Gastrocnemius medialis (tissue), 4 donors: ENCODE measurements at regions of chr10 and their contacts with region 1.

Region 1: DNA sequence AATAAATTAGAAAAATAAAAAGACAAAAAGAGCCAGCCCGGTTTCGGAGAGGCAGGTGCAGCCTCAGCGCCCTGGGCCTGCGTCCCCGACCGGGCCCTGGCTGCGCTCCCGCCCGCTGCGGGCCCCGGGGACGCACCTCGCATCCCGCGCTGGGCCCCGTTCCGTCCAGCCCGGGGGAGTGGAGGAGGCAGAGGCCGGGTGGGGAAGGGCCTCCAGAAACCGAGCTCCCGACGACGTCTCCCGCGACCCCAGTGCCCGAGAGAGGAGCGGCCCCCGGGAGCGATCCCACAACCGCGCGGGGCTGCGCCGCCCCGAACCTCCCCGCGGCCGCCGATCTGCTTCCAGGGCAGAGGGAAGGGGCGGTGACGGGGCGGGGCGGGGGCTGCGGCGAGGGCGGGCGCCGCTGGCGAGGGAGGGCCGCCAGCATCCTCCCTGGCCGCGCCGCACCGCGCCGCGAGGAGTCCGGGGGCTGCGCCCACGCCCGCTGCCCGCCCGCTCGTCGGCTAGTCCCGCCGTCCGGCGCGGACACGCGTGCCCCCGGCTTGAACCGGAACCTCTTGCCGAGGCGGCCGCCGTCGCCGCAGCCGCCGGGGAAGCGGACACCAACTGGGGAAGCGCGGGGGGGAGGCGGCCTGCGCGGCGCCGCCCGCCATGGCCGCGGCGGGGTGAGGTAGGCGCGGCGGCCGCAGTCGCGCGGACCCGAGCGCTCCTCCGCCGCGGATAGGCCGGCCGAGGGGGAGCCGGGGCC is at the start of gene CCNY:
- DNase-seq: peak; percentile 48 to 65
- ATAC-seq: peak; percentile 64 to 71
- H3K4me3 ChIP-seq: peak within 1 kb of the TSS; percentile 89 to 98 (median 94)
- H3K27ac ChIP-seq: peak within 1 kb of the TSS; percentile 87 to 98 (median 96)
- H3K4me1 ChIP-seq: peaks cover 71 to 82% of the 10 kb centered on the region in 2 donors
- H3K27me3 ChIP-seq: no peaks in the 10 kb centered on the region
- CTCF ChIP-seq: no peak
- POLR2A ChIP-seq: peak; percentile 88
- total RNA-seq, gene CCNY: 23.9 to 68.1 (median 39.5) TPM

Region 2: GRCh38 chr10:34801097-34801733 is 535.0 kb before region 1 on chr10:
- in situ Hi-C with region 1: no loop called
- intact Hi-C with region 1: no loop called
- DNase-seq: peak; percentile 38 to 53
- ATAC-seq: peak; percentile 81 to 95
- H3K4me3 ChIP-seq: peak overlapping the region in 1 of 4 donors; percentile 0
- H3K27ac ChIP-seq: peak overlapping the region in 2 of 4 donors; percentile 41 to 66
- H3K4me1 ChIP-seq: peaks cover 22 to 29% of the 10 kb centered on the region in 2 donors
- H3K27me3 ChIP-seq: no peaks in the 10 kb centered on the region
- CTCF ChIP-seq: no peak
- POLR2A ChIP-seq: no peak

Region 3: GRCh38 chr10:35103882-35104281 is 232.4 kb before region 1 on chr10:
- in situ Hi-C with region 1: loop called in 1 of 4 experiments (anchors 25 kb)
- intact Hi-C with region 1: no loop called
- DNase-seq: no peak
- ATAC-seq: no peak
- H3K4me3 ChIP-seq: no peak overlapping the region
- H3K27ac ChIP-seq: no peak overlapping the region
- H3K4me1 ChIP-seq: no peaks in the 10 kb centered on the region
- H3K27me3 ChIP-seq: no peaks in the 10 kb centered on the region
- CTCF ChIP-seq: no peak
- POLR2A ChIP-seq: no peak

Region 4: DNA sequence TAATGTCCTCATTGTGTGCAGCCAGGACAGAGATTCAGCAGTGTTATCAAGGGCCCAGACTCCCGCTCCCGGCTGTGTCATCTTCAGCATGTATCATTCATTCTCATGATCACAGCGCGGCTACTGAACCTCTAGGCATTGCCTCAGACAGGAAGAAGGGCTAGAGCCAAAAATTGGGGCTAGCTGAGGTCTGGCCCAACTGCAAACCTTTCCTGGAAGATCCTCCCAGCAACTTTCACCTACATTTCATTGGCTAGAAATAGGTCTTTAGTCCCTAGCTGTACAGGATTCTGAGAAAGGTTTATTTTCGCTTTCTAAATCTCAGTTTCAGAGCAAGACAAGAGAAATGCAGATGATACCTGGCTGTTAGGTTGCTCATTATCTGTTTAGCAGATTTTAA is 127.7 kb before region 1 on chr10:
- in situ Hi-C with region 1: no loop called
- intact Hi-C with region 1: loop called (anchors 5 kb)
- DNase-seq: peak; percentile 29 to 64
- ATAC-seq: peak; percentile 85 to 91
- H3K4me3 ChIP-seq: peak overlapping the region; percentile 22 to 43 (median 38)
- H3K27ac ChIP-seq: peak overlapping the region; percentile 78 to 88 (median 82)
- H3K4me1 ChIP-seq: peaks cover 18 to 19% of the 10 kb centered on the region in 2 donors
- H3K27me3 ChIP-seq: no peaks in the 10 kb centered on the region
- CTCF ChIP-seq: no peak
- POLR2A ChIP-seq: no peak

Region 5: DNA sequence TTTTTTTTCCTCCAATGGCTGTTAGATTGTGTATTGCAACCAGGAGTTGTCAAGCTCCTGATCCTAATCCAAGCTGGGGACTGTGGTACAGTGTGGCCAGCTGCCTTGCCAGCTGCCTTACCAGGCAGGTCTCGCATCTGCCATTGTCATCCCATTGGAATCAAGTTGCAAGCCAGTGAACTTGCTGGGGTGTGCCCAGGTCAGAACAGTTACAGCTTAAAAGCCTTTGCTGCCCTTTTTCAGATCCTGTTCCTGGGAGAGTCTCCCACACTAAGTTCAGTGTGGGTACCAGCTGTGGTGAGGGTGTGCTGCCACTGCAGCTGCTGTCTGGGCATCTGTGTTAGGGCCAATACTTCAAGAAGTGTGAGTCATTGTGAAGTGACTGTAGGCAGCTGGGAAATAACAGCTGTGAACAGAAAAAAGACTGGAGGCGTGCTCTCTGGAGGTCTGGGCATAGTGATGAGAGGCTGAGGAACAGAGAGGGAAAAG is 72.9 kb after region 1 on chr10:
- in situ Hi-C with region 1: no loop called
- intact Hi-C with region 1: loop called (anchors 5 kb)
- DNase-seq: peak; percentile 80 to 90
- ATAC-seq: peak; percentile 99
- H3K4me3 ChIP-seq: no peak overlapping the region
- H3K27ac ChIP-seq: peak overlapping the region; percentile 59 to 69 (median 67)
- H3K4me1 ChIP-seq: peaks cover 60 to 62% of the 10 kb centered on the region in 2 donors
- H3K27me3 ChIP-seq: no peaks in the 10 kb centered on the region
- CTCF ChIP-seq: no peak
- POLR2A ChIP-seq: peak in 1 of 2 donors; percentile 15

Region 6: GRCh38 chr10:35421553-35422178 is 85.4 kb after region 1 on chr10:
- in situ Hi-C with region 1: no loop called
- intact Hi-C with region 1: loop called (anchors 5 kb)
- DNase-seq: peak; percentile 50 to 53
- ATAC-seq: peak; percentile 89 to 91
- H3K4me3 ChIP-seq: peak overlapping the region; percentile 0 to 26 (median 16)
- H3K27ac ChIP-seq: peak overlapping the region; percentile 69 to 82 (median 79)
- H3K4me1 ChIP-seq: peaks cover 64 to 84% of the 10 kb centered on the region in 2 donors
- H3K27me3 ChIP-seq: no peaks in the 10 kb centered on the region
- CTCF ChIP-seq: no peak
- POLR2A ChIP-seq: peak in 1 of 2 donors; percentile 1

Region 7: GRCh38 chr10:35563261-35563891 is 227.1 kb after region 1 on chr10:
- in situ Hi-C with region 1: loop called in 2 of 4 experiments (anchors 10 to 25 kb)
- intact Hi-C with region 1: loop called (anchors 5 kb)
- DNase-seq: peak in 1 of 2 donors; percentile 31
- ATAC-seq: peak in 1 of 2 donors; percentile 61
- H3K4me3 ChIP-seq: no peak overlapping the region
- H3K27ac ChIP-seq: peak overlapping the region in 2 of 4 donors; percentile 3 to 21
- H3K4me1 ChIP-seq: peaks cover 28 to 34% of the 10 kb centered on the region in 2 donors
- H3K27me3 ChIP-seq: no peaks in the 10 kb centered on the region
- CTCF ChIP-seq: peak; percentile 78 to 92 (median 85)
- POLR2A ChIP-seq: no peak

Region 8: GRCh38 chr10:35642027-35642792 is 306.0 kb after region 1 on chr10 and contains the start of gene FZD8:
- in situ Hi-C with region 1: no loop called
- intact Hi-C with region 1: loop called (anchors 1 kb)
- DNase-seq: peak; percentile 84 to 89
- ATAC-seq: peak; percentile 77 to 80
- H3K4me3 ChIP-seq: peak within 1 kb of the TSS; percentile 73 to 88 (median 80)
- H3K27ac ChIP-seq: peak within 1 kb of the TSS; percentile 81 to 95 (median 89)
- H3K4me1 ChIP-seq: peaks cover 4 to 17% of the 10 kb centered on the region in 2 donors
- H3K27me3 ChIP-seq: no peaks in the 10 kb centered on the region
- CTCF ChIP-seq: peak in 3 of 5 experiments; percentile 5 to 39 (median 9)
- POLR2A ChIP-seq: peak; percentile 93 to 98
- total RNA-seq, gene FZD8: 3.0 to 9.3 (median 4.1) TPM